Activated B cell treated with CpG ODN at 0.5 μM for 24 hours (primary cell): ENCODE measurements at regions of chr9 and their contacts with region 1.

Region 1: GRCh38 chr9:14616188-14616982 is 76.8 kb downstream of the ZDHHC21 start:
- DNase-seq: no peak
- ATAC-seq: peak; percentile 57
- H3K4me3 Mint-ChIP-seq: no peak overlapping the region
- H3K27ac Mint-ChIP-seq: no peak overlapping the region
- H3K4me1 Mint-ChIP-seq: no peaks in the 10 kb centered on the region
- H3K27me3 Mint-ChIP-seq: no peaks in the 10 kb centered on the region
- CTCF ChIP-seq: peak; percentile 80

Region 2: DNA sequence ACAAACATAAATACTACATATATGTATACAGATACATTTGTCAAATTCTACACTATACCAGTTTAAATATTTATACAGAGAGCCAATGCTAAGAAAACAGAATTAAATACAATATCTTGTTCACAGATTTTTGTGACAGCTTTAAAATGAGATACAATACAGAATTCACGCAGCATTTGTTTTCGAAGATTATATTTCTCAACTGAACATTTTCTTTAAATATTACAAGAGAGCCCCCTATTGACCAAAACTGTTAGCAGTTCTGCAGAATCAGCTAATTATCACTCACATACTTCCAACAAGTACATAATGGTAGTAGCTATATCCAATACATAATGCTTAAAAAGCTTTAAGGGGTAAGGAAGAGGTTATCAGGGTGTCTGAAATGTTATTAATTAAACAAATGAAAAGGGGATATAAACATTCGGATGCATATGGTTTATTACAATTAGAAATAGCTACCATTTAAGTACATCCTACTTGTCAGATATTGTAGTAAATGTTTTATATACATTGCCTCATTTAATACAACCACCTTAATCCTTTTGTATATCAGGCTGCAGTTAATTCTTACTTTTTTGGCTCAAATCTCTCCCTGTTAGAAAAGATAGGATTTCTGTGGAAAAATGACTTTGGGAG is 45.2 kb after region 1 on chr9:
- CTCF ChIA-PET with region 1: interaction called, 3 read pairs
- POLR2A ChIA-PET with region 1: no interaction called
- intact Hi-C with region 1: loop called (anchors 2 kb)
- DNase-seq: no peak
- ATAC-seq: no peak
- H3K4me3 Mint-ChIP-seq: no peak overlapping the region
- H3K27ac Mint-ChIP-seq: no peak overlapping the region
- H3K4me1 Mint-ChIP-seq: peaks cover 2% of the 10 kb centered on the region
- H3K27me3 Mint-ChIP-seq: no peaks in the 10 kb centered on the region
- CTCF ChIP-seq: no peak

Region 3: GRCh38 chr9:14768405-14769229 is 152.2 kb after region 1 on chr9:
- CTCF ChIA-PET with region 1: interaction called, 71 read pairs
- POLR2A ChIA-PET with region 1: no interaction called
- intact Hi-C with region 1: loop called (anchors 1 kb)
- DNase-seq: no peak
- ATAC-seq: no peak
- H3K4me3 Mint-ChIP-seq: no peak overlapping the region
- H3K27ac Mint-ChIP-seq: no peak overlapping the region
- H3K4me1 Mint-ChIP-seq: no peaks in the 10 kb centered on the region
- H3K27me3 Mint-ChIP-seq: peaks cover 24% of the 10 kb centered on the region
- CTCF ChIP-seq: peak; percentile 84

Region 4: DNA sequence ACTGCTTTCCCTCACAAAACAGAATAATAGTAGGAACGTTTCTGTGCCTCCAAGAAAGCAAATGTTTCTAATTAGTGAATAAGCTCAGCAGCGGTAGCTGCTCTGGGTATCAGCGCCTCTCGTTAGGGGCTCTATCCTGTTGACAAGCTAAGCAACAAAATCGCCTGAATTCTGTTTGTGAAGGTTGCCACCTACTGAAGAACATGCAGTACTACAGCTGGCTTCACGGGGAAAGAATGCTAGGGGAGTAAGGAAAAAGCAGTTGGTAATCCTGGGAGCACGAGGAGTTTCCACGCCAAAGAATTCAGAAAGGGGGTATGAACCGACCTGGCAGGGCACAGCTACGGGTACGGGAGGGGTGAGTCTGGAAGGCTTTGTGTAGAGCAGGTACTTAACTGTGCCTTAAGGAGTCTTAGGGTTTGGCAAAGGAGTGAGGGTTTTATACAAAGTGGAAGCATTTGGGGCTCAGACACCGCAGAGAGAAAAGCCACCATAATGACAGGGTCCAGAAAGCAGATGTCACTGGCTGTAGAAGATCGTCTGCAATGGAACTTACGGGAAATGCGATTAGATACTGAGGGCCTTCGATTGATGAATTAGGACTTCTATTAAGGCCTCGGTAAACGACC is 518.9 kb after region 1 on chr9:
- CTCF ChIA-PET with region 1: interaction called, 4 read pairs
- POLR2A ChIA-PET with region 1: no interaction called
- intact Hi-C with region 1: loop called (anchors 2 kb)
- DNase-seq: no peak
- ATAC-seq: peak; percentile 65
- H3K4me3 Mint-ChIP-seq: no peak overlapping the region
- H3K27ac Mint-ChIP-seq: no peak overlapping the region
- H3K4me1 Mint-ChIP-seq: peaks cover 3% of the 10 kb centered on the region
- H3K27me3 Mint-ChIP-seq: peaks cover 4% of the 10 kb centered on the region
- CTCF ChIP-seq: no peak

Region 5: GRCh38 chr9:15469406-15469805 is 853.0 kb after region 1 on chr9:
- CTCF ChIA-PET with region 1: no interaction called
- POLR2A ChIA-PET with region 1: no interaction called
- intact Hi-C with region 1: no loop called
- DNase-seq: no peak
- ATAC-seq: no peak
- H3K4me3 Mint-ChIP-seq: no peak overlapping the region
- H3K27ac Mint-ChIP-seq: no peak overlapping the region
- H3K4me1 Mint-ChIP-seq: peaks cover 2% of the 10 kb centered on the region
- H3K27me3 Mint-ChIP-seq: no peaks in the 10 kb centered on the region
- CTCF ChIP-seq: no peak